AG04449 (cell line): ENCODE measurements at regions of chr12 and their contacts with region 1.

Region 1: GRCh38 chr12:91326058-91327027 is 143.7 kb upstream of the DCN start:
- DNase-seq: no peak
- H3K4me3 ChIP-seq: no peak overlapping the region
- CTCF ChIP-seq: peak; percentile 59

Region 2: DNA sequence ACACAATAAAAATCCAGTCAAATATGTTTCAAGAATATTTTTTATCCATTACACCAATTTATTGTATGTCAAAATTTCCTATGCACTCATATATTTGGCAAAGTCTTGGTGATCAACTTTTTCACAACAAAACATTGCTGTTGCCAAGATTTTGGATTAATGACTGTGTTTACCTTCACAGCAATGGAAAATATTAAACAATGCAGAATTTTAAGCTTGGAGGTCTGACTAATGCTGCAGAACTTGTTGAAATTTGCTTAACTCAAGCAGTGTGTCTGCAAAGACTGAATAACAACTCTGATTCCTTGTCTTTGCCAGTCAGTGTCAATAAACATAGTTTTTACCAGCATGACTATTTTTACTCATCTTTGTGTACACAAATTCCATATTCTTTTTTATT is 707.8 kb before region 1 on chr12:
- CTCF ChIA-PET with region 1: no interaction called
- POLR2A ChIA-PET with region 1: no interaction called
- DNase-seq: no peak
- H3K4me3 ChIP-seq: no peak overlapping the region
- CTCF ChIP-seq: no peak

Region 3: DNA sequence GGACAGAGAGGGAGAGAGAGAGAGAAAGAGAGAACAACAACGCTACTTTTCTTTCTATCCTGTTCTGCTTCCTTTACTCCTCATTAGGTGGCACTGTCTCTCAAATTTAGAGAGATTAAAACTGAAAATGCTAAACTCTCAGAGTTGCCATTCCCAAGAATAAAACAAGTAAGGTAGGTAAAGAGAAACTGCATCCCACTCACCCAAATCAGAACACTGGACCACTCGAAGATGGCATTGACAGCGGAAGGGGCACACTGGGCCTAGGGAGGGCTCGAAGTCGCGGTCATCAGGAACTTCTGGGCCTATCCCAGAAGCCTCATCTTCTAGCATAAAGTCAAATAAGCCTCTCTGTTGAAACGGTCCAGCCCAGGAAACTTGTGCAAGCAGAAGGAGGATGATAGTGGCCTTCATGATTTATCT is 148.2 kb before region 1 on chr12:
- CTCF ChIA-PET with region 1: interaction called, 100 read pairs
- POLR2A ChIA-PET with region 1: no interaction called
- DNase-seq: no peak
- H3K4me3 ChIP-seq: peak overlapping the region; percentile 40
- CTCF ChIP-seq: peak; percentile 41

Region 4: DNA sequence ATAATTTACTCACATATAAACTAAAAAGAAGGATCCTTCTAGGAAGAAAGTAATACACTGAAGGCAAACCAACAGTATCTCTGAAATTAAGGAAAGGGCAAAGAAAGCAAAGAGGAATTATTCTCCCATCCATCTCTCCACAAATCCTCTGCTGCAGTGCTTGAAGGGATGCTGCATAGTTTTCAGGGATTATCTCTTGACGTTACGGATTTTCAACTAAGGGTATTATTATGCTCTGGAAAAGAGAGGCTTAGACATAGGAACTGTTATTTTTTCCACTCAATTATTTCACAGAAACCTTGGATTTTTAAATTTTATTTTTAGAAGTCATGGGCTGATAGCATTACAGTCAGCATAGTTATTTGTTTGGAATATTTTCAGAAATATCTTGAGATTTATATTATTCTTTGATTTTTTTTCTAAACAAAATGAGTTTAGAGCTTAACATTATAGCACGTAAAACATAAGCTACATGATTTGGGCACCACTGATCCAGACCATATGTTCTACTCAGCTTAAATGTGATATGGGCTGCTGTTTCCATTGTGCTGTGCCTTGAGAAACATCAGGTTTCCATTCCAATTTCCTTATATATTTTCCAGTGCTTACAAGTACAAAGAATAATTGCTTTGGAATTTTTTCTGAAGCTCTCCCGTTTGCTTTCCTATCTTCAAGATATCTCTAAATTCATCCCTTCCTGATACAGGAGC is 85.8 kb before region 1 on chr12:
- CTCF ChIA-PET with region 1: interaction called, 18 read pairs
- POLR2A ChIA-PET with region 1: no interaction called
- DNase-seq: no peak
- H3K4me3 ChIP-seq: no peak overlapping the region
- CTCF ChIP-seq: no peak

Region 5: GRCh38 chr12:91349476-91349875 is 23.1 kb after region 1 on chr12:
- CTCF ChIA-PET with region 1: interaction called, 55 read pairs
- POLR2A ChIA-PET with region 1: no interaction called
- DNase-seq: no peak
- H3K4me3 ChIP-seq: no peak overlapping the region
- CTCF ChIP-seq: no peak